Left colon (tissue), 2 donors: ENCODE measurements at regions of chr2 and their contacts with region 1.

Region 1: GRCh38 chr2:48420512-48421197 is 109.3 kb upstream of the STON1 start:
- DNase-seq: peak; percentile 73 to 91
- ATAC-seq: peak; percentile 95

Region 2: GRCh38 chr2:47850198-47850597 is 570.5 kb before region 1 on chr2:
- intact Hi-C with region 1: loop called in 1 of 2 experiments (anchors 10 kb)
- DNase-seq: no peak
- ATAC-seq: no peak

Region 3: GRCh38 chr2:48107326-48107925 is 313.2 kb before region 1 on chr2:
- intact Hi-C with region 1: loop called in 1 of 2 experiments (anchors 5 kb)
- DNase-seq: no peak
- ATAC-seq: no peak

Region 4: DNA sequence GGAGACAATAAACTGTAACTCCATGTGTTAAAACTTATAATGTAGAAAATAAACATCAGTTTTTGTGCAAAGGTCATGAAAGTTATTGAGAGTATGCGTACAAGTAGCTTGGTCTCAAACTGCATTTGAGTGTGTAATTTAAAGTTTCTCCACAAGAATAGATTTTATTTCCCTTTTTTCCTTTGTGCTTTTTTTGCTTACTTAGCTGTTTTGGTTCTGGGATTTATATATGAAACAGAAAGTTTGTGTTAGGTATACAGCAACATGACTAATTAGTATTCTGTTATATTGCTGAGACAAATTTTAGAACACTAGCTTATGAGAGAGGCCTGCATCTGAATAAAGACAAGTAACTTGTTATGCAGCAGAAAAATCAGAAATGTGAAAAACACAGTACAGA is 264.5 kb after region 1 on chr2:
- intact Hi-C with region 1: no loop called
- DNase-seq: no peak
- ATAC-seq: no peak

Region 5: DNA sequence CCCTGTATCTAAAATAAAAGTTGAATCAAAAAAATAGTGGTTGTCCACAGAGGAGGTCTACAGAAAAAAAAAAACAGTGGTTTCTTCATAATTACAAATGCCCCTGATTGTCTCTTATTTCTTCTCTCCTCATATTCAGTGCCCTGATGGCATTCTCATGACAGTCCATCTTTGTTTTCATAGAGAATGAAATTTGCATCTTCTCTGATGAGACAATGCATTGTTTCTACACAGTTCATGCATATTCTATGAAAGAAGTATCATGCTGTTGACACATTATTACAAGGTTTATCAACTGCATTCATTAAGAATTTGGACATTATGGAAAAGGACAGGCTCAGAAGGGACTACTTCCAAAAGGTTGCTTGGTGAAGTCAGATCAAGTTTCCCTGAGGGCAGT is 275.3 kb after region 1 on chr2:
- intact Hi-C with region 1: no loop called
- DNase-seq: no peak
- ATAC-seq: no peak